Right cardiac atrium (tissue), 5 donors: ENCODE measurements at regions of chr16 and their contacts with region 1.

Region 1: GRCh38 chr16:4511441-4512082 is 27.0 kb downstream of the CDIP1 start:
- DNase-seq: peak; percentile 42 to 79 (median 77)
- ATAC-seq: peak; percentile 46 to 47
- H3K4me3 ChIP-seq: no peak overlapping the region
- H3K27ac ChIP-seq: peak overlapping the region; percentile 71
- H3K4me1 ChIP-seq: peaks cover 16% of the 10 kb centered on the region
- H3K27me3 ChIP-seq: no peaks in the 10 kb centered on the region

Region 2: DNA sequence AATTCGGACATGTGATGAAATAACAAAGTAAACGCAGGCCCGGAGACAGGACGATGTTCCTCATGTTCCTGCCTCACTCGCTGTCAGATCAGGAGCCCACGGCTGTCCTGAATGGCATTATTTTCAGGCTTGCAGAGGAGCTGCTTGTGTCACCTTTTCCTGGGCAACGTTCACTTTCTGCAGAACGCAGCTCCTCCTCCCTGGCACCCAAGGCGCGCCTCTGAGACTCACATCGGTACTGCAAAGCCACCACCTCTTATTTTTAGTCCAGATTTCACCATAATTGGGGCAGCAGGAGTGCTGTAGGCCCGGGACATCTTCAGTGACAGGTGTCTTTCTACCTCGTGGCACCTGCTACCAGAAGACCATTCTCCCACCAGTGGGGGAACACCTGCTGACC is 36.6 kb after region 1 on chr16:
- intact Hi-C with region 1: loop called (anchors 5 kb)
- DNase-seq: no peak
- ATAC-seq: no peak
- H3K4me3 ChIP-seq: no peak overlapping the region
- H3K27ac ChIP-seq: no peak overlapping the region
- H3K4me1 ChIP-seq: no peaks in the 10 kb centered on the region
- H3K27me3 ChIP-seq: no peaks in the 10 kb centered on the region

Region 3: GRCh38 chr16:4580245-4580644 is 68.7 kb after region 1 on chr16:
- intact Hi-C with region 1: loop called in 1 of 4 experiments (anchors 10 kb)
- DNase-seq: no peak
- ATAC-seq: no peak
- H3K4me3 ChIP-seq: no peak overlapping the region
- H3K27ac ChIP-seq: no peak overlapping the region
- H3K4me1 ChIP-seq: no peaks in the 10 kb centered on the region
- H3K27me3 ChIP-seq: no peaks in the 10 kb centered on the region

Region 4: DNA sequence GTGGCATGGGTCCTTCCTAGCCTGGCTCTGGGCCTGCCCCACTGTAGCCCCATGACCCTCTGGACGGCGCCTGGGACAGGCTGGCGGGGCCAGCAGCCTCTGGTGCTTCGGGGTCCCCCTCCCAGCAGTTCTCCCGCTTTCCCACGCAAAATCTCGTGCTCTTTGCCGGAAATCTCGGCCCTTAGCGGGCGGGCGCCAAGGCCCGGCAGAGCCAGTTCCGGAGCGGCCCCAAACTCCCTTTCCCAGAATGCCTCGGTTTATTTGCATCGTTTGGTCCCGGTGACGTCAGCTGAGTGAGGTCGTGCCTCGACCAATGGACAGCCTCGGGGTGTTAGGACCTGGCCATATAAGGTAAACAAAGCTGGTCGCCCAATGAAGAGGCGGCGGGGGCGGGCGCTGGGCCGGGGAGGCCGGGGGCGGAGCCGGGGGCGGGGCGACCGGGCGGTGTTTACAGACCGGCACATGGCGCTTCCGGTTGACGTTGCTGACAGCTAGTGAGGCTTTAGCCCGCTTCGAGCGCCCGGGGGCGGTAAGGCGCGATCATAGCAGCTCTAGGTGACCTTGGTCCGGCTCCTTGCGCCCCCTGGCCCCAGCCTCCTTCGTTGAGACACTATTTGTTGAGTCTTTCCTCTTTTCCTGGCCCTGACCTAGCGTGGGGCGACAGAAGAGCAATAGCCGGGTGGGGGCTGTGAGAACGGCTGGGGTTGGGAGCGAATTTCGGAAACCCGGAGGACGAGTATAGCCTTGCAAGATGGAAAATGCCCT is 104.7 kb after region 1 on chr16:
- intact Hi-C with region 1: loop called in 1 of 4 experiments (anchors 10 kb)
- DNase-seq: peak; percentile 99 to 100 (median 99)
- ATAC-seq: peak; percentile 93 to 94
- H3K4me3 ChIP-seq: peak overlapping the region; percentile 53
- H3K27ac ChIP-seq: peak overlapping the region; percentile 99
- H3K4me1 ChIP-seq: peaks cover 10% of the 10 kb centered on the region
- H3K27me3 ChIP-seq: no peaks in the 10 kb centered on the region